ENCODE measurements at regions of chr4 and their contacts with region 1.

Region 1: DNA sequence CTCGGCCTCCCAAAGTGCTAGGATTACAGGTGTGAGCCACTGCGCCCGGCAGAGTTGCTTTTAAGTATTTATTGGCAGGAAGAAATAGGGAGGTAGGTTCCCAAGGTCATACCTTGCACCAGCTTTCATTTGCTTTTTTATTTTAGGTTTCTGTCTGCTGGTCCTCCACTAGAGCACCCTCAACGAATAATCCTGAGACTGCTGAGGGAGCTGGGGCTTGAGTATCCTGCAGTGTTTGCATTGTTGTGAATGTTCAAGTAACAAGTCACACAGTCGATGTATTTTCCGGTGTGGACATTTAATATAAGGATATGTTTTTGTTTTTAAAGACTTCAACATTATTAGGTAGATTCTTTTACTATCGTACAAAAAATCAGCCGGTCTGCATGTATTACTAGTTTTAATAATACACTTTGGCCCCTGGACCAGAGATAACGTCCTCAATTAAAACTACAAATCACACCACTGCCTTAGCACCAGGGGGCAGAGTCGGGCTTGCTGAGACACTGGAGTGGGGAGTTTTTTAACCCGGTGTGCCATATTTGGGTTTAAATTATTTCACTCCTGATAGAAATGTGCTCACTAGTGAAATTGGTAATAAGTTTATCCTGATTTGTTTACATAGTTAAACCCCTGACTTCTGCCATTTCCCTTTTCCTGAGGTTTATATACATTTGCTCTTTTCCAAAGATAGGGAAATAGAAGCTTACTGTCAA is 11.6 kb downstream of the SMIM20 start:
- H3K4me3 Mint-ChIP-seq: no peak overlapping the region
- H3K27ac Mint-ChIP-seq: no peak overlapping the region
- H3K4me1 Mint-ChIP-seq: peaks cover 24% of the 10 kb centered on the region
- H3K27me3 Mint-ChIP-seq: no peaks in the 10 kb centered on the region

Region 2: GRCh38 chr4:25677157-25677556 is 248.5 kb before region 1 on chr4:
- intact Hi-C with region 1: no loop called
- H3K4me3 Mint-ChIP-seq: no peak overlapping the region
- H3K27ac Mint-ChIP-seq: no peak overlapping the region
- H3K4me1 Mint-ChIP-seq: no peaks in the 10 kb centered on the region
- H3K27me3 Mint-ChIP-seq: no peaks in the 10 kb centered on the region

Region 3: GRCh38 chr4:25783943-25784342 is 141.7 kb before region 1 on chr4:
- intact Hi-C with region 1: no loop called
- H3K4me3 Mint-ChIP-seq: no peak overlapping the region
- H3K27ac Mint-ChIP-seq: no peak overlapping the region
- H3K4me1 Mint-ChIP-seq: peaks cover 26% of the 10 kb centered on the region
- H3K27me3 Mint-ChIP-seq: peaks cover 20% of the 10 kb centered on the region

Region 4: GRCh38 chr4:25958110-25958509 is 32.5 kb after region 1 on chr4:
- intact Hi-C with region 1: no loop called
- H3K4me3 Mint-ChIP-seq: no peak overlapping the region
- H3K27ac Mint-ChIP-seq: no peak overlapping the region
- H3K4me1 Mint-ChIP-seq: peaks cover 21% of the 10 kb centered on the region
- H3K27me3 Mint-ChIP-seq: peaks cover 31% of the 10 kb centered on the region

Region 5: DNA sequence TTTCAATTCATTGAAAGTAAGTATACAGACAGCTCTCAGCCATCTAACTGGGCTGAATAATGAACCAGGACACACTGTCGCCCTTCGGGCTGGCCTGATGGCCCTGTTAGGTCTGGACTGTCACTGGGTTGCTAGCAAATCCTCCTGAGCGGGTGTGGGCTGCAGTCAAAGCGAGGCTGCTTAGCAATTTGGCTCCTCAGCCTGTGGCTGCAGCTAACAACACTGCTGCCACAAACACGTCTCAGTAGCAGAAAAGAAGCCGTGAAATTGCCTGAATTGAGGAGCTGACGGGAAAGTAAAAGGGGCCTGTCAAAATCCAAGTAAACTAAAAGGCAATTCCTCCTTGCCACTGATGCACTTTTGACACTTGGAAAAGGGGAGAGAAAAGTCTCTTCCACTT is 61.2 kb after region 1 on chr4:
- intact Hi-C with region 1: loop called (anchors 1 kb)
- H3K4me3 Mint-ChIP-seq: no peak overlapping the region
- H3K27ac Mint-ChIP-seq: no peak overlapping the region
- H3K4me1 Mint-ChIP-seq: peaks cover 73% of the 10 kb centered on the region
- H3K27me3 Mint-ChIP-seq: peaks cover 10% of the 10 kb centered on the region